Activated CD4-positive, alpha-beta memory T cell treated with anti-CD3 and anti-CD28 coated beads, Interleukin-2, amount 10 ng/mL, durations not matched to agents 7 days and 5 days (primary cell): ENCODE measurements at regions of chr4 and their contacts with region 1.

Region 1: GRCh38 chr4:1130316-1131186 is 17.2 kb upstream of the RNF212 start:
- DNase-seq: peak; percentile 81
- H3K4me3 Mint-ChIP-seq: no peak overlapping the region
- H3K27ac Mint-ChIP-seq: no peak overlapping the region
- H3K4me1 Mint-ChIP-seq: peaks cover 3% of the 10 kb centered on the region
- H3K27me3 Mint-ChIP-seq: peaks cover 19% of the 10 kb centered on the region

Region 2: GRCh38 chr4:1099684-1100335 is 30.7 kb before region 1 on chr4:
- CTCF ChIA-PET with region 1: no interaction called
- POLR2A ChIA-PET with region 1: no interaction called
- DNase-seq: no peak
- H3K4me3 Mint-ChIP-seq: no peak overlapping the region
- H3K27ac Mint-ChIP-seq: no peak overlapping the region
- H3K4me1 Mint-ChIP-seq: no peaks in the 10 kb centered on the region
- H3K27me3 Mint-ChIP-seq: no peaks in the 10 kb centered on the region

Region 3: GRCh38 chr4:1116838-1117237 is 13.7 kb before region 1 on chr4:
- CTCF ChIA-PET with region 1: interaction called, 17 read pairs
- POLR2A ChIA-PET with region 1: interaction called, 3 read pairs
- DNase-seq: no peak
- H3K4me3 Mint-ChIP-seq: no peak overlapping the region
- H3K27ac Mint-ChIP-seq: no peak overlapping the region
- H3K4me1 Mint-ChIP-seq: no peaks in the 10 kb centered on the region
- H3K27me3 Mint-ChIP-seq: peaks cover 18% of the 10 kb centered on the region

Region 4: GRCh38 chr4:1351854-1352633 is 221.5 kb after region 1 on chr4:
- CTCF ChIA-PET with region 1: interaction called, 25 read pairs
- POLR2A ChIA-PET with region 1: interaction called, 5 read pairs
- DNase-seq: peak; percentile 91
- H3K4me3 Mint-ChIP-seq: no peak overlapping the region
- H3K27ac Mint-ChIP-seq: peak overlapping the region; percentile 64
- H3K4me1 Mint-ChIP-seq: peaks cover 32% of the 10 kb centered on the region
- H3K27me3 Mint-ChIP-seq: no peaks in the 10 kb centered on the region